Body of pancreas (tissue), 4 donors: ENCODE measurements at regions of chr22 and their contacts with region 1.

Region 1: GRCh38 chr22:29524440-29525191 is 28.9 kb downstream of the THOC5 start:
- DNase-seq: peak; percentile 25 to 43 (median 37)
- ATAC-seq: no peak
- H3K4me3 ChIP-seq: no peak overlapping the region
- H3K27ac ChIP-seq: no peak overlapping the region
- H3K4me1 ChIP-seq: no peaks in the 10 kb centered on the region
- H3K27me3 ChIP-seq: no peaks in the 10 kb centered on the region
- CTCF ChIP-seq: peak in 5 of 7 experiments; percentile 16 to 49 (median 44)
- POLR2A ChIP-seq: no peak

Region 2: GRCh38 chr22:29291215-29291614 is 233.4 kb before region 1 on chr22:
- intact Hi-C with region 1: loop called (anchors 10 kb)
- DNase-seq: no peak
- ATAC-seq: no peak
- H3K4me3 ChIP-seq: no peak overlapping the region
- H3K27ac ChIP-seq: no peak overlapping the region
- H3K4me1 ChIP-seq: peaks cover 3% of the 10 kb centered on the region
- H3K27me3 ChIP-seq: no peaks in the 10 kb centered on the region
- CTCF ChIP-seq: no peak
- POLR2A ChIP-seq: no peak

Region 3: DNA sequence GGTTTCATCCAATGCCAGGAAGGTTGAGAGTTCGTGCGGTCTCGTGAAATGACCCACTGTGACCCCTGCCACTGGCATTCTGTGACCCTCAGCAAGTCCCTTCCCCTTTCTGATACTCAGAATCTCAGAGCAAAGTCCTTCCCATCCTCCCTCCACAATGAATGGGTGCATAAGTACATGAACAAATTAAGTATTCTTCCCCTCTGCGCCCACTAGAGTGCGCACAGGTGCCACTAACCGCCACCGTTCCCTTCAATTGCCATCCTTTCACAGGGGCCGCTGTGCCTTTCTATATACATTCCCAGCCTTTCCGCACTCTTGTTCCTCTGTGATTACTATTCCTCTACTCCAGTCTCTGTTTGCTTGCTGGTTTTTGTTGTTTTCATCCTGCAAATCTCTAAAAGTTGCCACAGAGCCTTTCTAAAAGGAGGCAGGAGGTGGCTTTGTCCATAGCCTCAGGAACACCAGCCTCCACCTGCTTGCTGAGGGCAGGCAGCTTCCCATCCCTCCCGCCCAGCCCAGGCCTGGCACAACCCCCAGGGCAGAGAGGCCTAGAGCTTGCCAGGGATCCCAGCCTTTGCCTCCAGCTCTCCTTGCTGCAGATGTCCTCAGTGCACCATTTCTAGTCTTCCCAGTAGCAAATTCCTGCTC is 129.6 kb before region 1 on chr22:
- intact Hi-C with region 1: loop called (anchors 10 kb)
- DNase-seq: peak; percentile 80 to 83 (median 82)
- ATAC-seq: peak; percentile 92
- H3K4me3 ChIP-seq: no peak overlapping the region
- H3K27ac ChIP-seq: no peak overlapping the region
- H3K4me1 ChIP-seq: peaks cover 18% of the 10 kb centered on the region
- H3K27me3 ChIP-seq: no peaks in the 10 kb centered on the region
- CTCF ChIP-seq: peak; percentile 60 to 94 (median 88)
- POLR2A ChIP-seq: no peak

Region 4: GRCh38 chr22:29480512-29481264 is 43.9 kb before region 1 on chr22:
- intact Hi-C with region 1: no loop called
- DNase-seq: peak in 2 of 4 donors; percentile 9 to 20
- ATAC-seq: no peak
- H3K4me3 ChIP-seq: no peak overlapping the region
- H3K27ac ChIP-seq: no peak overlapping the region
- H3K4me1 ChIP-seq: peaks cover 22% of the 10 kb centered on the region
- H3K27me3 ChIP-seq: peaks cover 7 to 28% of the 10 kb centered on the region in 2 donors
- CTCF ChIP-seq: peak in 1 of 7 experiments; percentile 3
- POLR2A ChIP-seq: no peak

Region 5: DNA sequence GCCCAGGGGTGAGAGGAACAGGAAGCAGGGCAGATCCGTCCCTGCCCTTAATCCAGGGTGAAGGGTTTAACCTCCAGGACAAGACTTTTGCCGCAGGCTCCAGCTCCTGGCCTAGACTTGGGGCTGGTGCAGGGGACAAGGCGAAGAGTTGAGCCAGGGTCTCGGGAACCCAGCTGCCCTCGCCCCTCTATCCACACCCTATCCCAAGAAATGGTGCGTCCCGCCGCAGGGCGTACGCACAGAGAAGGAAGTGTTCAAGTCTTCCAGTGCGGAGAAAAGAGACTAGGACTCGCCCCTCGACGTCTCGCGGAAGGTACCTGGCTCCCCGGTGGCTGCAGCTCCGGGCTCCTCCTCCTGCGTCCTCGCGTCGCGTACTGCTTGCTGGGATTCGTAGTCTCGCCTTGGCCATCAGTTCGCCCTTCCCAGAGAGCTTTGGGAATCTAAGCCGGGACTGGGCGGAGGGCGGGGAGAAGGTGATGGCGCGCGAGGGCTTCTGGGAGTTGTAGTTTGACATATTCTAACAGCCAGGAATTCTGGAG is 242.1 kb after region 1 on chr22 and contains the start of gene ZMAT5:
- intact Hi-C with region 1: no loop called
- DNase-seq: peak; percentile 96 to 98 (median 97)
- ATAC-seq: peak; percentile 99
- H3K4me3 ChIP-seq: peak within 1 kb of the TSS; percentile 82 to 99
- H3K27ac ChIP-seq: peak within 1 kb of the TSS; percentile 71 to 90 (median 80)
- H3K4me1 ChIP-seq: peaks cover 26% of the 10 kb centered on the region
- H3K27me3 ChIP-seq: no peaks in the 10 kb centered on the region
- CTCF ChIP-seq: no peak
- POLR2A ChIP-seq: peak; percentile 52 to 93 (median 92)
- total RNA-seq, gene ZMAT5: 9.1 to 9.9 TPM